Common myeloid progenitor, CD34-positive (primary cell): ENCODE measurements at regions of chr3 and their contacts with region 1.

Region 1: GRCh38 chr3:71710906-71711494 is 14.2 kb downstream of the EIF4E3 start:
- DNase-seq: peak; percentile 63 to 78 (median 76)
- H3K4me3 ChIP-seq: no peak overlapping the region
- H3K27ac ChIP-seq: no peak overlapping the region
- H3K4me1 ChIP-seq: peaks cover 3 to 18% (median 13%) of the 10 kb centered on the region in 4 experiments
- H3K27me3 ChIP-seq: no peaks in the 10 kb centered on the region

Region 2: GRCh38 chr3:71859123-71859519 is 148.1 kb after region 1 on chr3:
- CTCF ChIA-PET with region 1: interaction called, 59 read pairs
- POLR2A ChIA-PET with region 1: interaction called, 3 read pairs
- DNase-seq: peak; percentile 88 to 96 (median 94)
- H3K4me3 ChIP-seq: no peak overlapping the region
- H3K27ac ChIP-seq: no peak overlapping the region
- H3K4me1 ChIP-seq: peaks cover 2 to 6% (median 4%) of the 10 kb centered on the region in 4 experiments
- H3K27me3 ChIP-seq: peaks cover 0 to 2% (median 0%) of the 10 kb centered on the region in 5 experiments